Gastrocnemius medialis (tissue), 4 donors: ENCODE measurements at regions of chr19 and their contacts with region 1.

Region 1: GRCh38 chr19:45245334-45245787 is at the start of gene EXOC3L2:
- DNase-seq: no peak
- ATAC-seq: no peak
- H3K4me3 ChIP-seq: no peak within 1 kb of the TSS
- H3K27ac ChIP-seq: peak within 1 kb of the TSS in 3 of 4 donors; percentile 35 to 61 (median 36)
- H3K4me1 ChIP-seq: peaks cover 3 to 7% of the 10 kb centered on the region in 2 donors
- H3K27me3 ChIP-seq: no peaks in the 10 kb centered on the region
- CTCF ChIP-seq: no peak
- POLR2A ChIP-seq: no peak
- total RNA-seq, gene EXOC3L2: 0.46 to 0.55 TPM in 2 of 4 donors, not detected in the others

Region 2: GRCh38 chr19:44927746-44928145 is 317.6 kb before region 1 on chr19:
- in situ Hi-C with region 1: no loop called
- intact Hi-C with region 1: no loop called
- DNase-seq: no peak
- ATAC-seq: no peak
- H3K4me3 ChIP-seq: no peak overlapping the region
- H3K27ac ChIP-seq: no peak overlapping the region
- H3K4me1 ChIP-seq: peaks cover 0 to 14% of the 10 kb centered on the region in 2 donors
- H3K27me3 ChIP-seq: no peaks in the 10 kb centered on the region
- CTCF ChIP-seq: no peak
- POLR2A ChIP-seq: no peak

Region 3: GRCh38 chr19:45164577-45165335 is 80.6 kb before region 1 on chr19:
- in situ Hi-C with region 1: no loop called
- intact Hi-C with region 1: loop called (anchors 5 kb)
- DNase-seq: peak in 1 of 2 donors; percentile 36
- ATAC-seq: no peak
- H3K4me3 ChIP-seq: no peak overlapping the region
- H3K27ac ChIP-seq: no peak overlapping the region
- H3K4me1 ChIP-seq: no peaks in the 10 kb centered on the region
- H3K27me3 ChIP-seq: peaks cover 21 to 22% (median 22%) of the 10 kb centered on the region in 3 donors
- CTCF ChIP-seq: no peak
- POLR2A ChIP-seq: no peak

Region 4: GRCh38 chr19:45200568-45200994 is 44.8 kb before region 1 on chr19:
- in situ Hi-C with region 1: no loop called
- intact Hi-C with region 1: loop called (anchors 5 kb)
- DNase-seq: no peak
- ATAC-seq: no peak
- H3K4me3 ChIP-seq: no peak overlapping the region
- H3K27ac ChIP-seq: no peak overlapping the region
- H3K4me1 ChIP-seq: no peaks in the 10 kb centered on the region
- H3K27me3 ChIP-seq: no peaks in the 10 kb centered on the region
- CTCF ChIP-seq: peak in 3 of 5 experiments; percentile 13 to 20 (median 15)
- POLR2A ChIP-seq: no peak